Left cardiac atrium (tissue), 4 donors: ENCODE measurements at regions of chr22 and their contacts with region 1.

Region 1: DNA sequence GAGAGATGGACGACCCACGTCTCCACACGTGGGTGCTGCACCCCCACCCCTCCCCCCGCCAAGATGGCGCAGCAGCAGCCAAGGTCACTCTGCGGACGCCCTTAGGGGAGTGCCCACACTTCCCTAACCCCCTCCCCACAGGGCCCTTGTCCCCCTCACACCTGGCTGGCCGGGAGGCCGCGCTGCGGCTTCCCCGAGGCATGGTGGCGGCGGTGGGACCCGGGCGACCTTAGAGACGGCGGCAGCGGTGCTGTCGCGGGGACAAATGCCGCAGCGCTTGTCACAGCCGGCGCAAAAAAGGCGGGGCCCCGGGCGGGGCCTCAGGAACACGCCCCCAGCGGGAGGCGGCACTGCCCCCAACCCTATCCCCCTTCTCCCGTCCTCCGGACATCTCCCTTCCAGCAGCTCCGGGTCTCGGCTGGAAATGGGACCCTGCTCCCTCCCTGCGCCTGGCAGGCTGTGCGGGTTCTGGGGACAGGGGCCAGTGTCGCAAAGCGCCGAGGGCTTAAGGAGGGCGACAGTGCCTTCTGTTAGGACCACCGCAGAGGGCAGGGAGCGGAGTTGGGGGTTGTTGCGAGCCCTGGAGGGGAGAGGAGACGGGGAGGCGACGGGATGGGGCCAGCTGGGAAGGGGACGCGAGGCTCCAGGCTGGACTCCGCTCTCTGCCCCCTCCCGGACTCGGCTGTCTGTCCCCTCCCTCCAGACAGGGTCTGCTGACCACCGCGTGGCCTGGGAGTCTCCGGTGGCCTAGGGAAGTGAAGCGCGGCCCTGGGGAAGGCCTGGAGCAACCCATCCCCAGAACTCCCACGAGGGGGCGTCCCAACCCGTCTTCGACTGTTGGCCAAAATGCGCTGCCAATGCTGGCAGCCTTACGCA is at the start of gene CHCHD10:
- DNase-seq: peak; percentile 88
- ATAC-seq: peak; percentile 81 to 85
- total RNA-seq, gene CHCHD10: 958 to 1,106 TPM

Region 2: DNA sequence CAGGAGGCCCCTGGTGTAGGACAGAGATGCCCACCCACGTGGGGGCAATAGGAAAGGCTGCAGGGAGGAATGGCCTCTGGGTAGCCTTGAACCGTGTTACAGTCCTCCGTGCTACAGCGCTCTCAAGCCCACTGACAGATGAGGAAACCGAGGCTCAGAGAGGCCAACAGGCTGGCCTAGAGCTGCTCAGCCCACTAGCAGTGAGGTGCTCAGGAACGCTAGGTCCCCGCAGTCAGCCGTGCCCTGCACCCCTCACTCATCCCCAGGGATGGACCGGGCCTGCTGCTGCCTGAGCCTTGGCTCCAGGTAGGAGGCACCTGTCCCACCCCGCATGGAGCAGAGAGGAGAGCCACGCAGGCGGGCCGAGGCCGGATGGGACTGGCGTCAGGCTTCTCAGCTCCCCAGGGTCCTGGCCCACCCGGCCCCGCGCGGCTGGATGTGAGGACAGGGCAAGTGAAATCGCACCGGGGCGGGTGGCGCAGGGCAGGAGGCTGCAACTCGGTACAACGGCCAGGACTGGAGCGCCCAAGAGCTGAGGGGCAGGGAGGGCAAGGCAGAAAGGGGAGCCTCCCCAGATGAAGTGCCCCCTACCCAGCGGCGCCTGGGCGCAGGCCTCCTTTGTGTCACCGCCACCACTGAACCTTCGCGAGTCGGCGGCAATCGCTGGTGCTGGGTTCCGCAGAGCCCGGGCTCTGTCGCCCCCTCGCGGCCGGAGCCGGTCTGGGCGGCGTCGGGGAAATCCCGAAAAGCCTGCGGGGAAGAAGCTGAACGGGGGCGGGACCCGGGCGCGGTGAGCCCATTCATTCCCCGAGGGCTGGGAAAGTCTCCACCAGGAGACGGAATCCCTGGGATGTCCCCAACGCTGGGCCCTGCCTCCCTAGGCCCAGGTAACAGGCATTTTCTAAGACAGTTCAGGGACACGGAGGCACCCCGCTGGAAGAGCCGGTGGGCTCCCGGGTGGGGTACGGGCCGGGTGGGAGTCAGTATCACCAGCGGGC is 81.4 kb after region 1 on chr22:
- intact Hi-C with region 1: loop called (anchors 5 kb)
- DNase-seq: peak; percentile 85
- ATAC-seq: peak; percentile 64 to 70